Mammary epithelial cell (primary cell): ENCODE measurements at regions of chr17 and their contacts with region 1.

Region 1: GRCh38 chr17:19362277-19363113 is at the start of gene B9D1:
- DNase-seq: peak; percentile 88
- H3K4me3 ChIP-seq: peak within 1 kb of the TSS; percentile 73 to 87 (median 77)
- H3K27ac ChIP-seq: peak within 1 kb of the TSS; percentile 73
- H3K4me1 ChIP-seq: peaks cover 20% of the 10 kb centered on the region
- H3K27me3 ChIP-seq: no peaks in the 10 kb centered on the region
- CTCF ChIP-seq: peak; percentile 77 to 94
- total RNA-seq, gene B9D1: 21.2 to 23.2 TPM

Region 2: DNA sequence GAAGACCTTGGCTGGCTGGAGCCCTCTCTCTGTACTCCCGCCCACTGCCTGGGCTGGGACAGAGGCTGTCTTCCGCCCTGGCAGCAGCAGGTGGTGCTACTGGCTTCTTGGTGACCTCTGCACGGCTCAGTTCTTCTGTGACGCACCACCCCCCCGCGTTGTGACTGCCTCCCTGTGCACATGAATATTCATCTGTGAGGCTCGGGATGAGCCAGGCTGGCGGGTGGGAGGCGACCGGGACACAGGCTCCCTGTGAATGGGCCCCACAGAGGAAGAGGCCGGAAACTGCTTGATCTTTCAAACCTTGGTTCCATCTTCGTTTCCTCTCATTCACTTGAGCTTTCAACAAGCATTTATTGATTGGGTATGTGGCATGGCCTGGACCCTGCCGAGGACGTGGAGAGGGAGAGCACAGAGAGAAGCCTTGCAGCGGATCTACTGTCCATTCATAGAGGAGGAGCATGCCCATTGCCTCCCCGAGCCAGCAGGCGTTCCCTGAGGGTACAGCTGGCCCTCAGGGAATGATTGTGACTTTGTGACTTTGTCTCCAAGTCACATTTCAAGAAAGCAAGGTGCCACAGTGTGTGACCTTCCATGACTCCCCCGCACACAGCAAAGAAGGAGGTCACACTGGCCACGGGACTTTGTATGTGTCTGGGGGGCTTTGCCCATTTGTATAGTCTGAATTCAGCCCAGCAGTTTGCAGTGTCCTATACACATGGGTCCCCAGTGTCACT is 45.0 kb before region 1 on chr17:
- CTCF ChIA-PET with region 1: no interaction called
- dilution Hi-C with region 1: no loop called
- in situ Hi-C with region 1: no loop called
- intact Hi-C with region 1: loop called (anchors 5 kb)
- DNase-seq: no peak
- H3K4me3 ChIP-seq: no peak overlapping the region
- H3K27ac ChIP-seq: no peak overlapping the region
- H3K4me1 ChIP-seq: peaks cover 2% of the 10 kb centered on the region
- H3K27me3 ChIP-seq: no peaks in the 10 kb centered on the region
- CTCF ChIP-seq: peak in 1 of 2 donors; percentile 35

Region 3: GRCh38 chr17:19457830-19458271 is 95.4 kb after region 1 on chr17:
- CTCF ChIA-PET with region 1: no interaction called
- dilution Hi-C with region 1: loop called (anchors 5 kb)
- in situ Hi-C with region 1: loop called in 1 of 2 experiments (anchors 5 kb)
- intact Hi-C with region 1: no loop called
- DNase-seq: no peak
- H3K4me3 ChIP-seq: no peak overlapping the region
- H3K27ac ChIP-seq: no peak overlapping the region
- H3K4me1 ChIP-seq: no peaks in the 10 kb centered on the region
- H3K27me3 ChIP-seq: peaks cover 2% of the 10 kb centered on the region
- CTCF ChIP-seq: no peak

Region 4: DNA sequence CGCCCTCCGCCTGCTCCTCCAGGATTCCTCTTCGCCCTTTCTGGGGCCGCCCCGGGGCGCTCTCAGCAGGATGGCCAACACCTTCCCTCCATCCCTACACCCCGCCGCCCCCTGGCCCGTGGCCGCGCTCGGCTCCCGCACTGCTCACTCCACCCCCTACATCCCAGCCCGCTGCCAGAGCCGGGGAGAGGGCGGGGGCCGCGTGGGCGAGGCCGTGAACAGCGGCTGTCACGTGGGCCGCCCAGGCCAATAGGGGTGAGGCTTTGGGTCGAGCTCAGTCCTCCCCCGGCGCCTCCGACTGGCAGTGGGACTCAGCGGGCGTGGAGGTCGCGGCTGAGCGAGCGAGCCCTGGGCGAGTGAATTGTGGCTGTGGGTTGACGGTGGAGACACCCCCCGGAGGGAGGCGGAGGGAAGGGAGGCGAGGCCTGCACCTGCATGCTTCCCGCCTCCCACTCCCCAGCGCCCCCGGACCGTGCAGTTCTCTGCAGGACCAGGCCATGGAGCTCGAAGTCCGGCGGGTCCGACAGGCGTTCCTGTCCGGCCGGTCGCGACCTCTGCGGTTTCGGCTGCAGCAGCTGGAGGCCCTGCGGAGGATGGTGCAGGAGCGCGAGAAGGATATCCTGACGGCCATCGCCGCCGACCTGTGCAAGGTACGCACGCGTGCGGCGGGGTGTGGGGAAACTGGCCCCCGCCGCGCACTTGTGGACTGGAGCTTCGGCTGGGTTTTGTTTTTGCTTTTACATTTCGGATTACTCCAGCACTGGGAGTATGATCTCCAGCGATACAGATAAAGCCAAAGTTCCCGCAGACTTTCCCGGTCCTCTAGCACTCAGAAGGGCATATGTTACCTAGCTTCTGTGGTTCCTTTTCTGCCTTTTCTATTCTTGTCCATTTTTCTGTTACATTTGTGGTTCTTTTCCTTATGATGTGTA is 286.2 kb after region 1 on chr17 and contains the start of gene ALDH3A2:
- CTCF ChIA-PET with region 1: no interaction called
- dilution Hi-C with region 1: no loop called
- in situ Hi-C with region 1: no loop called
- intact Hi-C with region 1: loop called (anchors 10 kb)
- DNase-seq: peak; percentile 91
- H3K4me3 ChIP-seq: peak within 1 kb of the TSS; percentile 78 to 94 (median 84)
- H3K27ac ChIP-seq: peak within 1 kb of the TSS; percentile 72
- H3K4me1 ChIP-seq: peaks cover 40% of the 10 kb centered on the region
- H3K27me3 ChIP-seq: no peaks in the 10 kb centered on the region
- CTCF ChIP-seq: no peak
- total RNA-seq, gene ALDH3A2: 59.5 to 212 TPM

Region 5: DNA sequence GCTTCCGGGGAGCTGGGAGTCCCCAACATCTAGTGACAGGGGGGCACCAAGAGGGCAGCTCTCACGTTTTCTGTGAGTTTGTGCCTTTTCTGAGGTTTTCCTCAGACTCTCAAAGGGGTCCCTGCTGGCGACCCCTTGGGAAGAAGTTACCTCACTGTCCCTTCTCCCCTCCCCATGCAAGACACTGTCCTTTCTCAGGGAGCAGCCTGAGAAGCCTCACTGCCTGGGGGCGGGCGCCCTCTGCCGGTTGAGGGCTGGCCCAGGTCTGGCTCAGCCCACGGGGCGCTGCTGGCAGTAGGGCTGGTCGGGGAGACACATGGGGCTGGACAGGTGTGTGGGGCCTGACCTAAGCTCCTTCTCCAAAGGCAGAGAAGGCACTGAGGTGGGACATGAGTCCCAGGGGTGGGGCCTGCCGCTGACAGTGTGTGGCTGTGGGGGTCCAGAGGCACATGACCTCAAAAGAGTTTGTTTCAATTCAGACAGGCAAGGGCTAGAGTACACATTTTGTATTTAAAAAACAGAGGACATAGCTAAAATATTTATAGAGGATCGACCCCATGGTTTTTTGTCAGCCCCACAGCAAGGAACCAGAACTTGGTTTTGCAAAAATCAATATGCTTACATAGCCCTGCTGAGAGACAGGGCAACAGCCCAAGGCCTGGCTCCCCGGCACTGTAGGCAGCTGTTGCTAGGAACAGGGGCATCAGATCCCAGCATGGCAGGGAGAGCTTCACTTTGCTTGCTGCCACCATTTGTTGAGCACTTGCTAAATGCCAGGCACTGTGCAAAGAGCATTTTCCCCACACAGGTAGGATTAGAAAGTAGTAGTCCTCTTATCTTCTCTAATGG is 404.2 kb after region 1 on chr17:
- CTCF ChIA-PET with region 1: interaction called, 4 read pairs
- dilution Hi-C with region 1: loop called (anchors 25 kb)
- in situ Hi-C with region 1: loop called in 1 of 2 experiments (anchors 10 kb)
- intact Hi-C with region 1: loop called (anchors 1 kb)
- DNase-seq: peak; percentile 38
- H3K4me3 ChIP-seq: no peak overlapping the region
- H3K27ac ChIP-seq: no peak overlapping the region
- H3K4me1 ChIP-seq: no peaks in the 10 kb centered on the region
- H3K27me3 ChIP-seq: no peaks in the 10 kb centered on the region
- CTCF ChIP-seq: peak; percentile 87 to 100